Activated CD8-positive, alpha-beta memory T cell treated with anti-CD3 and anti-CD28 coated beads, Interleukin-2, amount 10 ng/mL, durations not matched to agents 7 days and 5 days (primary cell): ENCODE measurements at regions of chr21 and their contacts with region 1.

Region 1: DNA sequence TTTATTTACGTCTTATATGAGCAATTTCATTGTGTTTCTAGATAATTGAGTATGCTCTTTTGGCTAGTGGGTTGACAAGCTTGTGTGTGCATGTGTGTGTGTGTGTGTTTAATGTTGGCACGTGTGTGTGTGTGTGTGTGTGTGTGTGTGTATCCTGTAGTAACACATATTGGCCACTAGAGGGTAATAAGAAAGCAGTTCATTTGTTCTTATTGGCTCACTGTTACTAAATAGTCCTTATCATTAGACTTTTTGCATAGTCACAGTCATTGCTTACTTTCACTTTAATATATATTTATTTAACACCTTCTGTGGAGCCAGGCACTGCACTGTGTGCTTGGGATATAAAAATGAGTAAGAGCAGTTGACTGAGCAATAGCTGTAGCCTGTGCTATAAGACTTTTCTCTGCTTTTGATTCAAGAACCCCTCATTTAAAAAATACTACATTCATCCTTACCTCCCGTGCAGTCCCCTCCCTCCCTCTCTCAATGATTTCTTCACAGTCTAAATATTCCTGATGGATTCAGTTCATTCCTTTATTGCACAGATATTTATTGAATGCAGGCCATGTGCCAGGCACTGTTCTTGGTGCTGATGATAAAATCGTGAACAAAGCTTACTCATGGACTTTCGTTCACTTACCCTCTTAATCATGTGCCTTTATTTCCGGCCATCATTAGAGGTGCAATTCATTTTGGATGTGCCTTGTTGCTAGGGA is 96.7 kb downstream of the DYRK1A start:
- DNase-seq: no peak
- ATAC-seq: peak; percentile 63
- H3K4me3 Mint-ChIP-seq: no peak overlapping the region
- H3K27ac Mint-ChIP-seq: peak overlapping the region; percentile 66
- H3K4me1 Mint-ChIP-seq: peaks cover 46% of the 10 kb centered on the region
- H3K27me3 Mint-ChIP-seq: no peaks in the 10 kb centered on the region

Region 2: DNA sequence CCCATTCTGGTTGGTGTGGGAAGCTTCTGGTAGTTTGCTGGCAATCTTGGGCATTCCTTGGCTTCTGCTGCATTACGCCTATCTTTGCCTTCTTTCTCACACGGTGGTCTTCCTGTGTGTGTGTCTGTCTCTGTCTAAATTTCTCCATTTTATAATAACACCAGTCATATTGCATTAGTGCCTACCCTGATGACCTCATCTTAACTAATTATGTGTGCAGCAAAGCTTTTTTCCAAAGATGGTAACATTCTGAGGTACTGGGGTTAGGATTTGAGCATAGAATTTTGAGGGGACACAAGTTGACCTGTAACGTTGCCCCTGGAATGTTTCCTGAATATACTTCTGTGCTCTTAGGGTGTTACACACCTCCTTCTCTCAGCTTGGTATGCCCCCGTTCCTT is 19.6 kb before region 1 on chr21:
- CTCF ChIA-PET with region 1: no interaction called
- DNase-seq: no peak
- ATAC-seq: no peak
- H3K4me3 Mint-ChIP-seq: no peak overlapping the region
- H3K27ac Mint-ChIP-seq: no peak overlapping the region
- H3K4me1 Mint-ChIP-seq: peaks cover 27% of the 10 kb centered on the region
- H3K27me3 Mint-ChIP-seq: no peaks in the 10 kb centered on the region

Region 3: DNA sequence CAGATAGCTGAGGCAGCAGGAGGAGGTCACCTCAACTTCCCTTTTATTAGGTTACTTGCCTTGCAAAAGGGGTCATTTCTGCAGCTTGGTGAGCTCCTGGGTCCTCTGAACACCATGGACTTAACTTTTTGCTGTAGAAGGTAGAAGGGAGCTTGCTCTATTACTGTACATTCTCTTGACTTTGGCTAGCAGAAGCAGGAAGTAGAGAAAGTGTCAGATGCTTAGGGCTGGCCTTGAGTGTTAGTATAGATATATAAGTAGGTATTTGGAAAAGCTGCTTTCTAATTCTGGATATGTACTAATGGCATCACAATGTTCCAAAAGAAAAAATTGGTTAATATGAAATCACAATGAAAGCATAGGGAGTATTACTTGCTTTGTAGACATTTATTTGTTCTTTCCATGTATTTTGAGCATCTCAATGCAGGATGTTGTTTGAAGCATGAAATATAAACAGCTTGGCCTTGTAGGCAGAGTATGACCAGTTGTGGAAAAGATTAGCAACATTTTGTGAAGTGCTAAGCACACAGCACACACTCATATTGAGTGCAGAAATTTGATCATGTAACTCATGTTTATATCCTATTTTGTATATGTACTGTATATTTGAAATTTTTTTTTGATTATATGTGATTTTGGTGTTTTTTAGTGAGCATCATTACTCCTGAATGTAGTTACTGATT is 12.1 kb after region 1 on chr21:
- CTCF ChIA-PET with region 1: interaction called, 14 read pairs
- DNase-seq: no peak
- ATAC-seq: peak; percentile 67
- H3K4me3 Mint-ChIP-seq: no peak overlapping the region
- H3K27ac Mint-ChIP-seq: peak overlapping the region; percentile 21
- H3K4me1 Mint-ChIP-seq: peaks cover 27% of the 10 kb centered on the region
- H3K27me3 Mint-ChIP-seq: no peaks in the 10 kb centered on the region

Region 4: GRCh38 chr21:37490084-37490483 is 26.8 kb after region 1 on chr21:
- CTCF ChIA-PET with region 1: no interaction called
- DNase-seq: no peak
- ATAC-seq: no peak
- H3K4me3 Mint-ChIP-seq: no peak overlapping the region
- H3K27ac Mint-ChIP-seq: no peak overlapping the region
- H3K4me1 Mint-ChIP-seq: peaks cover 6% of the 10 kb centered on the region
- H3K27me3 Mint-ChIP-seq: no peaks in the 10 kb centered on the region

Region 5: DNA sequence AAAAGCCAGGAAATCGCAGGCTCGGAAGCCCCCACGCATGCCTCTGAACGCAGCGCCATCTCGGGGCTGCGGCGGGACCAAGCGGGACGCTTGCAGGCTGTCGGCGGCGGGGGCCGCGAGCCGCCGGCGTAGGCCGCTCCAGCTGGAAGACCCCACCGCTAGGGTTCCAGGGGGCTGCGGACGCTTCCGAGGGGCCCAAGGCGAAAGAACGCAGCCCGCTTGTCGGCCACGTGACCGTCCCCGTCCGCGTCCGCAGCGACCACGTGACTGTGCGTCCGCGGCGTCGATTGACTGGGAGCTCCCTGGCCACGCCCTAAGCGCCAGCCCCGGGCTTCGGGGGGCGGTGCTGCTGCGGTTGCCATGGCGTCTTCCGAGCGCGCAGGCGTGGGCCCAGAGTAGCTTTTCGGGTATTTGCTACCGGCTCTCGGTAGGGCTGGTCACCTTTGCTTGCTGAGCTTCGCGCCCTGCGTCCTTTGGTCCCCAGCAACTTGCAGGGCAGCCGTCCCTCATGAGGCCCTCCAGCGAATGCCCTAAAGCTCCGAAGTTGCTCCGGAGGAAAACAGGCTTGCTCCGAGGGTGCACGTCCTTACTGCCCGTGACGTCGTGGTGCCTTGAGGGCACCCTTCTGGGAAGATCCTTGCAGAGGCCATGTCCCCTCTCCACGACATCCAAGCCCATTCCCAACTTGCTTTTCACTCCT is 100.5 kb after region 1 on chr21:
- CTCF ChIA-PET with region 1: interaction called, 12 read pairs
- DNase-seq: peak; percentile 95
- ATAC-seq: peak; percentile 87
- H3K4me3 Mint-ChIP-seq: peak overlapping the region; percentile 87
- H3K27ac Mint-ChIP-seq: peak overlapping the region; percentile 99
- H3K4me1 Mint-ChIP-seq: peaks cover 22% of the 10 kb centered on the region
- H3K27me3 Mint-ChIP-seq: no peaks in the 10 kb centered on the region